Breast epithelium (tissue), 4 donors: ENCODE measurements at regions of chr7 and their contacts with region 1.

Region 1: DNA sequence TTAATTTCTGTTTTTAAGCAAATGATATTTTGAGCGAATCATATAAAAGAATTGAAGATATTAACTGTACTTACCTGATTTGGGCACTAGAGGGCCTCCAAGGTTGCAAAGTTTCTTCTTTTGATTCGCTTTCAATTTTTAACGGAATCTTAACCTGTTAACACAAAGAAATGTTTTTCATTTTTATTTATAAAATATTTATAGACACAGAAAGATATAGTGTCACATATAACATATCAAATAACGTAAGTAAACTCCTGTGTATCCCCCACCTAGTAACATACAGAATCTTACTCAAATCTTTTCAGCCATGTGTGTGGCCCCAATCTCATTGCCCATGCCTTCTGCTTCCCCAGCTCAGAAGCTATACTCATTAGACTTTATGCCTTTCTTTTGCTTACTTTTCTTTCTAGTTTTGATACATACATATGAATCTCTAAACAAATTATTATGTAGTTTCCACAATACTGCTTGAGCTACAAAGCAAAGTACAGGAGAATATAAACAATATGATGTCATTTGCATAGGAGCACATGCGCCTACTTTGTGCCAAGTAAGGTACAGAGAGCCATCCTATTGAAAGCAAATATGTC is 49.5 kb upstream of the ZPBP start:
- DNase-seq: no peak
- H3K4me3 ChIP-seq: no peak overlapping the region
- H3K27ac ChIP-seq: no peak overlapping the region
- H3K4me1 ChIP-seq: no peaks in the 10 kb centered on the region
- H3K27me3 ChIP-seq: no peaks in the 10 kb centered on the region
- CTCF ChIP-seq: peak; percentile 9 to 57 (median 55)
- POLR2A ChIP-seq: no peak

Region 2: DNA sequence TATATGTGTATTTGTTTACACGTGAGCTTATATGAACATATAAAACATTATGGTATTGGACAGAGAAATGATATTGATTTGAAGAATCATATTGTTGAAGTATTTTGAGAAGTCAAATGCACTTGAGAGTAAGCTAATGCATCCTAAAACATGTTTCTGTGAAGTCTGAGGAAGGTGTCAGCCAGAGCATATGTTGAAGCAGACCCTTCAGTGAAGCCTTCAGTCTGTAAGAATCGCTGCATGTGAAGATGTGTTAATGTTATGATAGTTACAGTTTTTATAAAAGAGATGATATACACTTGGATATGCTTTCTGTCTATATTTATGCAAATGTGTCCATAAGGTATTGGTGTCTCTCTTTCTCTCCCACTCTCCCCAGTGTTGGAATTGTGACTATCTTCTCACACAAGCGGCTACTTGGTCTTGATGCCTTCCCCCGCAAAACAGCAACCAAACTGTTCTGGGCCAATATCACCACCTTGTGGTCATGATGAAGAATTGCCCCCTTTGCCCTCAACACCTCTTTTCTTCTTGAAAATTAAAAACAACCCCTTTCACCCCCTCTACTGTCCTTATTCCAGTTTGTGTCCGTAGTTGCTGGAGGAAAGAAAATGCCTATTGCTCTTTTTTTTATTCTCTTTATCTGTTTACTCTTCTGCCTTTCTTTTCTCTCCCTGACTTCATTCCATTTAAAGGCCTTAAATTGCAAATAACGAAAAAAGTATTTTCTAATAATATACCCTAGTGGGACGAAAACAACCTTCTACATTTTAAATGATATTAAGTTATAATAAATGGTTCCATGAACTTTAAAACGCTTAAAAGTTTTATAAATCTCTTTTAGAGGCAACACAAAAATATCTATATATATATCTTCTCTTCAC is 226.9 kb after region 1 on chr7:
- intact Hi-C with region 1: loop called (anchors 10 kb)
- DNase-seq: no peak
- H3K4me3 ChIP-seq: no peak overlapping the region
- H3K27ac ChIP-seq: no peak overlapping the region
- H3K4me1 ChIP-seq: no peaks in the 10 kb centered on the region
- H3K27me3 ChIP-seq: no peaks in the 10 kb centered on the region
- CTCF ChIP-seq: peak in 1 of 3 donors; percentile 10
- POLR2A ChIP-seq: no peak

Region 3: GRCh38 chr7:50653126-50653864 is 510.8 kb after region 1 on chr7:
- intact Hi-C with region 1: no loop called
- DNase-seq: no peak
- H3K4me3 ChIP-seq: peak overlapping the region in 2 of 3 donors; percentile 8 to 32
- H3K27ac ChIP-seq: peak overlapping the region; percentile 45 to 84
- H3K4me1 ChIP-seq: peaks cover 0 to 4% of the 10 kb centered on the region in 2 donors
- H3K27me3 ChIP-seq: no peaks in the 10 kb centered on the region
- CTCF ChIP-seq: no peak
- POLR2A ChIP-seq: no peak